CD8-positive, alpha-beta T cell (primary cell): ENCODE measurements at regions of chr14 and their contacts with region 1.

Region 1: GRCh38 chr14:50773632-50774541 is 57.1 kb downstream of the NIN start:
- DNase-seq: peak in 3 of 9 experiments; percentile 17 to 42 (median 24)
- ATAC-seq: peak; percentile 64
- H3K4me3 ChIP-seq: no peak overlapping the region
- H3K4me3 Mint-ChIP-seq: no peak overlapping the region
- H3K27ac ChIP-seq: no peak overlapping the region
- H3K27ac Mint-ChIP-seq: peak overlapping the region; percentile 13
- H3K4me1 ChIP-seq: peaks cover 21% of the 10 kb centered on the region
- H3K4me1 Mint-ChIP-seq: peaks cover 29% of the 10 kb centered on the region
- H3K27me3 ChIP-seq: no peaks in the 10 kb centered on the region
- H3K27me3 Mint-ChIP-seq: no peaks in the 10 kb centered on the region
- CTCF ChIP-seq: peak; percentile 70

Region 2: GRCh38 chr14:50301914-50302313 is 472.0 kb before region 1 on chr14:
- CTCF ChIA-PET with region 1: no interaction called
- POLR2A ChIA-PET with region 1: no interaction called
- intact Hi-C with region 1: no loop called
- DNase-seq: no peak
- ATAC-seq: no peak
- H3K4me3 ChIP-seq: no peak overlapping the region
- H3K4me3 Mint-ChIP-seq: no peak overlapping the region
- H3K27ac ChIP-seq: no peak overlapping the region
- H3K27ac Mint-ChIP-seq: no peak overlapping the region
- H3K4me1 ChIP-seq: no peaks in the 10 kb centered on the region
- H3K4me1 Mint-ChIP-seq: peaks cover 1% of the 10 kb centered on the region
- H3K27me3 ChIP-seq: no peaks in the 10 kb centered on the region
- H3K27me3 Mint-ChIP-seq: no peaks in the 10 kb centered on the region
- CTCF ChIP-seq: no peak

Region 3: DNA sequence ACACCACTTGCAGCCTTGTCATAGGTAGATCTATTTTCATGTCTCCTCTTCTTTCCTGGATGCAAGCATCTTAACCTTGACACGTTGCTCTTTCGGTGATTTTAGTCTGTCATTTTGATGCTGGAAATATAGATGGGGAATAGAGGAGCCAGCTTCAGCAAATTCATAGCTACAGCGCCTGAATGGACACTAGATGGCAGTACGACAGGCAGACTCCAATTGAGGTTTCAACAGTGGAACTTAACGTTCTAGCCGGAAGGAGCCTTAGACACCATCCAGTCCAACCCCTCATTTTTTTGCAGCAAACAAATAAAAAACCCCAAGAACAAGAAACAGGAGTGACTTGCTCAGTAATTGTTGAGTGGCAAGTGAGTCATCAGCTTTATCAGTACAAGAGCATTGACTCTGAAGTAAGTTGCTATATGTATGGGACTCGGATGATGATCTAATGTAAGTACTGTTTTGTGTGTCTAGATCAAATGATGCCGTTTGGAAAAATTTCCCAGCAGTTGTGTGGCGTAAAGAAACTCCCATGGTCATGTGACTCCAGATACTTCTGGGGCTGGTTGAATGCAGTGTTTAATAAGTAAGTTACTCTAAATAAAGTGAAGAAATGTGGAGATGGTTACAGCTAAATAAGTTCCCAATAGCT is 452.8 kb before region 1 on chr14:
- CTCF ChIA-PET with region 1: interaction called, 3 read pairs
- POLR2A ChIA-PET with region 1: no interaction called
- intact Hi-C with region 1: loop called in 1 of 2 experiments (anchors 5 kb)
- DNase-seq: peak; percentile 29 to 93 (median 68)
- ATAC-seq: peak; percentile 95
- H3K4me3 ChIP-seq: no peak overlapping the region
- H3K4me3 Mint-ChIP-seq: no peak overlapping the region
- H3K27ac ChIP-seq: peak overlapping the region; percentile 10 to 59
- H3K27ac Mint-ChIP-seq: no peak overlapping the region
- H3K4me1 ChIP-seq: peaks cover 7% of the 10 kb centered on the region
- H3K4me1 Mint-ChIP-seq: peaks cover 21% of the 10 kb centered on the region
- H3K27me3 ChIP-seq: no peaks in the 10 kb centered on the region
- H3K27me3 Mint-ChIP-seq: no peaks in the 10 kb centered on the region
- CTCF ChIP-seq: peak; percentile 88

Region 4: DNA sequence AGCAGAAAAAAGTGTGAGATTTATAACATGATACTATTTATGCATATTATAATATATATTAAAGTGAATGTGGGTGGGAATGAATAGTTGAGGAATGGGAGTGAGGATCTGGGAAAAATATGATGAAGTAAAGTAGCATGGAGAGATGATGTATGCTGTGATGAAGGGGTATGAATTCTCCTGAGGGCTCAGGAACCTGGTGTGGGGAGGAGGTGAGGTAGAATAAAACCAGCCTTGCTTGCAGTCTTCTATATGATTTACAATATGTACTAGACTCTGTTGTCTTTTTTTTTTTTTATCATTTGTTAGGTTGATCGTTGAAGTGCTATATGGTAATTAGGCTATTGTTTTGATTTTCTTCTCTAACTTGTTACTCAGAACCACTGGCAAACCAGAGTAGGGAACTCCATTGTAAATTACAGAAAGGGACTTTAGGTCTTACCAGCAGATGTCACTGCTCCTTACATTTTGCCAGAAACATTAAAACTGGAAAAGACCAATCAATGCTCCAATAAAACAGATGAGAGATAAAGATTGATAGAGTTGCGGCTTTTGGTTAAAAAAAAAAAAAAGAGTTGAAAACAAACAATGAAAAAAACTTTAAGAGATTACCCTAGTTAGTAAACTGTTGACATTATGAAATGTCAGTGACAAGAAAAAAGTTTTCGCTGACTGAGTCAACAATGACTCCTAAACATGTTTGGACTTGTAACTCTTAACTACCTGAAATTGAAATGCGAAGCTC is 174.0 kb before region 1 on chr14:
- CTCF ChIA-PET with region 1: interaction called, 6 read pairs
- POLR2A ChIA-PET with region 1: no interaction called
- intact Hi-C with region 1: loop called (anchors 1 to 2 kb)
- DNase-seq: peak in 2 of 9 experiments; percentile 30 to 51
- ATAC-seq: peak; percentile 23
- H3K4me3 ChIP-seq: no peak overlapping the region
- H3K4me3 Mint-ChIP-seq: no peak overlapping the region
- H3K27ac ChIP-seq: no peak overlapping the region
- H3K27ac Mint-ChIP-seq: no peak overlapping the region
- H3K4me1 ChIP-seq: no peaks in the 10 kb centered on the region
- H3K4me1 Mint-ChIP-seq: no peaks in the 10 kb centered on the region
- H3K27me3 ChIP-seq: no peaks in the 10 kb centered on the region
- H3K27me3 Mint-ChIP-seq: no peaks in the 10 kb centered on the region
- CTCF ChIP-seq: peak; percentile 34

Region 5: GRCh38 chr14:50726372-50727107 is 47.3 kb before region 1 on chr14:
- CTCF ChIA-PET with region 1: interaction called, 6 read pairs
- POLR2A ChIA-PET with region 1: no interaction called
- intact Hi-C with region 1: loop called in 1 of 2 experiments (anchors 5 kb)
- DNase-seq: peak in 2 of 9 experiments; percentile 39 to 69
- ATAC-seq: peak; percentile 92
- H3K4me3 ChIP-seq: no peak overlapping the region
- H3K4me3 Mint-ChIP-seq: peak overlapping the region; percentile 12
- H3K27ac ChIP-seq: peak overlapping the region; percentile 7 to 41
- H3K27ac Mint-ChIP-seq: peak overlapping the region; percentile 86
- H3K4me1 ChIP-seq: peaks cover 12% of the 10 kb centered on the region
- H3K4me1 Mint-ChIP-seq: peaks cover 29% of the 10 kb centered on the region
- H3K27me3 ChIP-seq: no peaks in the 10 kb centered on the region
- H3K27me3 Mint-ChIP-seq: no peaks in the 10 kb centered on the region
- CTCF ChIP-seq: no peak

Region 6: DNA sequence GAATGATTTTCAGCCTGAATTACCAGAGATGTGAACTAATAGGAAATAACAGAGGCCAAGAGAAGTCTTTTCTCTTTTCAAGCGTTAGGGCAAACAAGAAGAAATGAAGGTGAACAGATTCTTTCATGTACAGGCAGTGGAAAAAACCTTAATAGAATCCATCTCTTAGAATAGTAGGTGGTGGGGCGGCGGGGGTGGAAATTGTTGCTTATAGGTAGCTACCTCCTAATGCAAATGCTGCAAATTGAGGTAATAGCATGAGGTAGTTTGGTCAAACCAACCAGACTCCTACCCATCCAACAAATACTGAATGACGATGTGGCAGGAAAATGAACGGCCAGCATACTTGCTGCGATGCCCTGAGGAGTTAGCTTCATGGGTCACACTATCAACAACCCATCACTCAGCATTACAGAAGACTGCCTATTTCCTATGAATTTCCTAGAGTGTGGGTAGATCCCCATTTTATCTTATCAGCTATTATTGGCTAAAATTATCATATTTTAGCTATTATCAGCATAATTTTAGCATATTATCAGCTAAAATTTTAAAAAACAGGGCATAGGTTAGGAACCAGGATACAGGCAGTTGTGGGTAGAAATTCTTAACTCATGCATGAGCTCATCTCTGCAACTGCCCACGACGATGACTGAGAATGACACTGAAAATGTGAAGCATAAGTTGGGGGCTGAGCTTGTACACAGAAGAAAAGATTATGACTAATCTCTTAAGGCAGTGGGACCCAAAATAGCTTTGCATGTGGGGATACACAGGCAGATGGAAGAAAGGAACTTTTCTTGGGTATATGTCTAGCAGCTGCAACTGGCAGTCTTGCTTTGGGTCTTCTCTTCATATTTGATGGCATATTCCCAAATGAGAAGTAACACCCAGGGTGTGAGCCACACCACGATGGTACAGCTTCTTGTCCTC is 11.6 kb before region 1 on chr14:
- CTCF ChIA-PET with region 1: interaction called, 25 read pairs
- POLR2A ChIA-PET with region 1: interaction called, 3 read pairs
- intact Hi-C with region 1: no loop called
- DNase-seq: no peak
- ATAC-seq: no peak
- H3K4me3 ChIP-seq: no peak overlapping the region
- H3K4me3 Mint-ChIP-seq: no peak overlapping the region
- H3K27ac ChIP-seq: no peak overlapping the region
- H3K27ac Mint-ChIP-seq: no peak overlapping the region
- H3K4me1 ChIP-seq: no peaks in the 10 kb centered on the region
- H3K4me1 Mint-ChIP-seq: peaks cover 7% of the 10 kb centered on the region
- H3K27me3 ChIP-seq: no peaks in the 10 kb centered on the region
- H3K27me3 Mint-ChIP-seq: no peaks in the 10 kb centered on the region
- CTCF ChIP-seq: no peak

Region 7: GRCh38 chr14:50804181-50804721 is 30.4 kb after region 1 on chr14:
- CTCF ChIA-PET with region 1: interaction called, 23 read pairs
- POLR2A ChIA-PET with region 1: no interaction called
- intact Hi-C with region 1: no loop called
- DNase-seq: no peak
- ATAC-seq: no peak
- H3K4me3 ChIP-seq: no peak overlapping the region
- H3K4me3 Mint-ChIP-seq: no peak overlapping the region
- H3K27ac ChIP-seq: no peak overlapping the region
- H3K27ac Mint-ChIP-seq: peak overlapping the region; percentile 68
- H3K4me1 ChIP-seq: peaks cover 8% of the 10 kb centered on the region
- H3K4me1 Mint-ChIP-seq: peaks cover 72% of the 10 kb centered on the region
- H3K27me3 ChIP-seq: no peaks in the 10 kb centered on the region
- H3K27me3 Mint-ChIP-seq: no peaks in the 10 kb centered on the region
- CTCF ChIP-seq: no peak

Region 8: GRCh38 chr14:50830932-50831725 is 57.2 kb after region 1 on chr14 and contains the start of gene NIN:
- CTCF ChIA-PET with region 1: interaction called, 30 read pairs
- POLR2A ChIA-PET with region 1: interaction called, 19 read pairs
- intact Hi-C with region 1: loop called in 1 of 2 experiments (anchors 1 kb)
- DNase-seq: peak; percentile 44 to 89 (median 75)
- ATAC-seq: peak; percentile 80
- H3K4me3 ChIP-seq: peak within 1 kb of the TSS; percentile 79 to 86
- H3K4me3 Mint-ChIP-seq: peak within 1 kb of the TSS; percentile 97
- H3K27ac ChIP-seq: peak within 1 kb of the TSS; percentile 76 to 87
- H3K27ac Mint-ChIP-seq: peak within 1 kb of the TSS; percentile 98
- H3K4me1 ChIP-seq: peaks cover 50% of the 10 kb centered on the region
- H3K4me1 Mint-ChIP-seq: peaks cover 68% of the 10 kb centered on the region
- H3K27me3 ChIP-seq: no peaks in the 10 kb centered on the region
- H3K27me3 Mint-ChIP-seq: no peaks in the 10 kb centered on the region
- CTCF ChIP-seq: no peak
- total RNA-seq, gene NIN: 121 to 132 TPM

Region 9: GRCh38 chr14:51239813-51240803 is 466.2 kb after region 1 on chr14 and contains the start of gene TMX1:
- CTCF ChIA-PET with region 1: no interaction called
- POLR2A ChIA-PET with region 1: no interaction called
- intact Hi-C with region 1: no loop called
- DNase-seq: peak; percentile 58 to 94 (median 85)
- ATAC-seq: peak; percentile 93
- H3K4me3 ChIP-seq: peak within 1 kb of the TSS; percentile 76 to 95
- H3K4me3 Mint-ChIP-seq: no peak within 1 kb of the TSS
- H3K27ac ChIP-seq: peak within 1 kb of the TSS; percentile 57 to 77
- H3K27ac Mint-ChIP-seq: no peak within 1 kb of the TSS
- H3K4me1 ChIP-seq: peaks cover 30% of the 10 kb centered on the region
- H3K4me1 Mint-ChIP-seq: peaks cover 24% of the 10 kb centered on the region
- H3K27me3 ChIP-seq: no peaks in the 10 kb centered on the region
- H3K27me3 Mint-ChIP-seq: no peaks in the 10 kb centered on the region
- CTCF ChIP-seq: no peak
- total RNA-seq, gene TMX1: 10.2 to 11.1 TPM